CD8-positive, alpha-beta T cell (primary cell): ENCODE measurements at regions of chr7 and their contacts with region 1.

Region 1: GRCh38 chr7:7707806-7708205 is 10.6 kb downstream of the RPA3 start:
- DNase-seq: no peak
- ATAC-seq: no peak
- H3K4me3 ChIP-seq: no peak overlapping the region
- H3K4me3 Mint-ChIP-seq: no peak overlapping the region
- H3K27ac ChIP-seq: no peak overlapping the region
- H3K27ac Mint-ChIP-seq: no peak overlapping the region
- H3K4me1 ChIP-seq: no peaks in the 10 kb centered on the region
- H3K4me1 Mint-ChIP-seq: peaks cover 25% of the 10 kb centered on the region
- H3K27me3 ChIP-seq: no peaks in the 10 kb centered on the region
- H3K27me3 Mint-ChIP-seq: no peaks in the 10 kb centered on the region
- CTCF ChIP-seq: no peak

Region 2: DNA sequence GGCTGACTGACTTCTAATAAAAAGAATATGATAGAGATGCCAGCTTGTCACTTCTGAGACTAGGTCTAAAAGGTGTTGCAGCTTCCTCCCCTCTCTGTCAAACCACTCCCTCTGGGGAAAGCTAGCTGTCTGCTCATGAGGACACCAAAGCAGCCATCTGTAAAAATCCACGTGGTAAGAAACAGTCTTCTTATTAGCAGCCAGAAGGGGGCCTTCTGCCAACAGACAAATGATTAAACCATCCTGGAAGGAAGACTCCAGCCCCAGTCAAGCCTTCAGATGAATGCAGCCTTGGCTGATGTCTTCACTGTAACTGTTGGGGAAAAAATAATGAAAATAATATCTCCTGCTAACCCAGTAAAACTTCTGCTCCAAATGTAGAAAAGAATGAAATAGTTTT is 1218.2 kb before region 1 on chr7:
- CTCF ChIA-PET with region 1: no interaction called
- POLR2A ChIA-PET with region 1: no interaction called
- intact Hi-C with region 1: loop called in 1 of 2 experiments (anchors 5 kb)
- DNase-seq: no peak
- ATAC-seq: no peak
- H3K4me3 ChIP-seq: no peak overlapping the region
- H3K4me3 Mint-ChIP-seq: no peak overlapping the region
- H3K27ac ChIP-seq: no peak overlapping the region
- H3K27ac Mint-ChIP-seq: no peak overlapping the region
- H3K4me1 ChIP-seq: peaks cover 2% of the 10 kb centered on the region
- H3K4me1 Mint-ChIP-seq: peaks cover 4% of the 10 kb centered on the region
- H3K27me3 ChIP-seq: no peaks in the 10 kb centered on the region
- H3K27me3 Mint-ChIP-seq: peaks cover 3% of the 10 kb centered on the region
- CTCF ChIP-seq: no peak